Transverse colon (tissue), 4 donors: ENCODE measurements at regions of chr6 and their contacts with region 1.

Region 1: DNA sequence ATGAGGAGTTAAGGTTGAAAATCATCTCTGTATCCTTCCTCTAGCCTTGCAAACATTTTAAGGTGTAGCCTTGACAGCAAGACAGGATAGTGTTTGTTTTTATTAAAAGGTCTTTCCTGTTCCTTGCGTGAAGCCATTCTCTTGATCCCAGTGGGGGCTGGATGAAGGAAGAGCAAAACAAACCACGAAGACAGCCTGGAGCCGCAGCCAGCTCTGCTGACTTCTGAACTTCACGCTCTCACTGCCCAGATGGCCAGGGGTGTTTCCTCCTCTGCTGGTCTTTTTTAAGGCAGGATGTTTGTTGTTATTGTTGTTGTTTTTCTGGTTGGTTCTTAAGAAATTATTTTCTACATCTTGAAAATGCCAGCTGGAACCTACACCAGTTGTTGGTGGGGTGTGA is 156.4 kb downstream of the MTHFD1L start:
- DNase-seq: no peak
- H3K4me3 ChIP-seq: no peak overlapping the region
- H3K27ac ChIP-seq: no peak overlapping the region
- H3K4me1 ChIP-seq: peaks cover 0 to under 1% (median 0%) of the 10 kb centered on the region in 4 donors
- H3K27me3 ChIP-seq: no peaks in the 10 kb centered on the region
- CTCF ChIP-seq: no peak
- EP300 ChIP-seq: no peak
- POLR2A ChIP-seq: no peak

Region 2: DNA sequence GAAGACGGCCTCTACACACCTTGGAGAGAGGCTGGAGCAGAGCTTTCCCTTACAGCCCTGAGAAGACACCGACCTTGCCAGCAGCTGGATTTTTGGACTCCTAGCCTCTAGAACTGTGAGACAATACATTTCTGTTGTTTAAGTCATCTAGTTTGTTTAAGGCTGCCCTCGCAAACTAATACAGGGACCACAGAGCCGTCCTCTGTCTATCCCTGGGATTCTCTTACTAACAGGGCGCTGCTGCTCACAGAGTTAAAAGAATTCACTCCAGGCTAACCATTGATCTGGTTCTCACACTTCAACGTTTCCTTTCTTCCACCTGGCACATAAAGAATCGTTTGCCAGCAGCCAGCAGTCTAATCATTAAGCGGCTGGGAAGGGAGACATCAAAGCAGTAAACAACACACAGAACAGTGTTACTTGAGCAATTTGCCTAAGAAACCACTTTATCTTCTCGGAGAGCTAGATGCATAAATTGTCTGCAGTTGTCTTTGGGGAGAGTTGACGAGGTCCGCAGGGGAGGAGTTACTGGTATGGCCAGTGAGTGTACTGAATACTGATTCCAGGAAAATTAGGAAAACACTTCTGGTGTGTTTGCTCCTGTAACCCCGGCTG is 114.4 kb after region 1 on chr6:
- in situ Hi-C with region 1: no loop called
- intact Hi-C with region 1: loop called (anchors 10 kb)
- DNase-seq: no peak
- H3K4me3 ChIP-seq: no peak overlapping the region
- H3K27ac ChIP-seq: peak overlapping the region in 3 of 4 donors; percentile 23 to 49 (median 39)
- H3K4me1 ChIP-seq: peaks cover 0 to 7% (median 5%) of the 10 kb centered on the region in 4 donors
- H3K27me3 ChIP-seq: no peaks in the 10 kb centered on the region
- CTCF ChIP-seq: no peak
- EP300 ChIP-seq: no peak
- POLR2A ChIP-seq: no peak